CD4-positive, alpha-beta memory T cell (primary cell): ENCODE measurements at regions of chr19 and their contacts with region 1.

Region 1: GRCh38 chr19:11798391-11799330 is at the start of gene ZNF491:
- DNase-seq: peak; percentile 72 to 84 (median 73)
- H3K4me3 ChIP-seq: peak within 1 kb of the TSS in 1 of 2 donors; percentile 58
- H3K4me3 Mint-ChIP-seq: peak within 1 kb of the TSS; percentile 87 to 93 (median 90)
- H3K27ac ChIP-seq: peak within 1 kb of the TSS; percentile 64
- H3K27ac Mint-ChIP-seq: peak within 1 kb of the TSS; percentile 75 to 92 (median 88)
- H3K4me1 ChIP-seq: peaks cover 11% of the 10 kb centered on the region
- H3K4me1 Mint-ChIP-seq: peaks cover 10 to 18% (median 12%) of the 10 kb centered on the region in 4 donors
- H3K27me3 ChIP-seq: no peaks in the 10 kb centered on the region
- H3K27me3 Mint-ChIP-seq: no peaks in the 10 kb centered on the region
- total RNA-seq, gene ZNF491: 2.0 to 3.0 TPM

Region 2: DNA sequence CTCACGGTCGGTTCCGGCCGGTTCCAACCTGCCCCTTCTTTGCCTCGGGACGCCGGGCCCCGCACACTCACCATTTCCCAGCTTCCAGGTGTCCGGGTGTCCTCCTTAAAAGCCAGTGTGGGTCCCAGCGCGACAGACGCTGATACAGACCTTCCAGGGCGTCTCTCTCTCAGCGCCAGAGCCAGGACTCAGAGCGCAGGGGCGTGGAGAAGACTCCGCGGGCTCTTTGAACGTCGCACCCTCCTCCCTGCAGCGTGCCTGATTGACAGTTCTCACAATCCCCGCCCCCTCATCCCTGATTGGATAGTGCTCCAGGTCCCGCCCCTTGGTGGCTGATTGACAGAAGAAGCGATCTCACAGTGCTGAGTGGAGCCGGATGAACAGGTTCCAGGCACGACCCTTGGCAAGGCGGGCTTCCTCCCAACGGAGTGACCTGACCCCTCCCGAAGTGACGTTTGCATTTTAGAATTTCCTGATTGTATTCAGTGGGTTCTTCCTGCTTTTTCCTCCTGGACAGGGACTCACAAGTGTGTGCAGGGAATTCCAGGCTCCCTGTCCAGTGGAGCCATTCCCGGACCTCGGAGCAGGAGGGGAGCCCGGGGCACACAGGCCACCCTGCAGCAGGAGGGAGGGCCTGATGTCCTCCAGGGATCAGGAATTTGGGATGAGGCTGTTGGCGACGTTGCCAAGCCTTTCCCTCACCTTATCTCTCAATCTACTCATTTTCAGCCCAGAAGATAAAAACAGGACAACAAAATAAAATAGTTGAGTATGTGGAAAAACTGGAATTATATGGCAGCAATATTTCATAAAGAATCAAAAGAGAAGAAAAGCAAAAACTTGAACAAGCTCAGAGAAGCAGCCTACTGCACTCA is 59.7 kb before region 1 on chr19 and contains the start of gene ZNF823:
- CTCF ChIA-PET with region 1: interaction called, 3 read pairs
- POLR2A ChIA-PET with region 1: no interaction called
- intact Hi-C with region 1: loop called (anchors 5 kb)
- DNase-seq: peak; percentile 94 to 97 (median 95)
- H3K4me3 ChIP-seq: peak within 1 kb of the TSS; percentile 45 to 80
- H3K4me3 Mint-ChIP-seq: peak within 1 kb of the TSS; percentile 96 to 100 (median 99)
- H3K27ac ChIP-seq: peak within 1 kb of the TSS; percentile 63
- H3K27ac Mint-ChIP-seq: peak within 1 kb of the TSS; percentile 77 to 99 (median 97)
- H3K4me1 ChIP-seq: peaks cover 15% of the 10 kb centered on the region
- H3K4me1 Mint-ChIP-seq: peaks cover 15 to 30% (median 17%) of the 10 kb centered on the region in 4 donors
- H3K27me3 ChIP-seq: no peaks in the 10 kb centered on the region
- H3K27me3 Mint-ChIP-seq: no peaks in the 10 kb centered on the region
- total RNA-seq, gene ZNF823: 4.6 to 5.4 TPM

Region 3: DNA sequence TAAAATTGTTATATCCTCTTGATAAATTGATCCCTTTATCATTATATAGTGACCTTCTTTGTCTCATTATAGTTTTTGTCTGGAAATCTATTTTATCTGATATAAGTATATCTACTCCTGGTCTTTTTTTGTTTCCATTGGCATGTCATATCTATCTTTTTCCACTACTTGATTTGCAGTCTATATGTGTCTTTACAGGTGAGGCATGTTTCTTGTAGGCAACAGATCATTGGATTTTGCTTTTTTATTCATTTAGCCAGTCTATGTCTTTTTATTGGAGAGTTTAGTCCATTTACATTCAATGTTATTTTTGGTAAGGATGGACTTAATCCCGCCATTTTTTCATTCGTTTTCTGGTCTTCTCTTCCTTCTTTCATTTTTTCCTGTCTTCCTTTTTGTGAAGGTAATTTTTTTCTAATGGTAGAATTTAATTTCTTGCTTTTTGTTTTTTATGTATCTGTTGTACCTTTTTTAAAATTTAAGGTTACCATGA is 46.4 kb before region 1 on chr19:
- CTCF ChIA-PET with region 1: no interaction called
- POLR2A ChIA-PET with region 1: no interaction called
- intact Hi-C with region 1: no loop called
- DNase-seq: no peak
- H3K4me3 ChIP-seq: no peak overlapping the region
- H3K4me3 Mint-ChIP-seq: no peak overlapping the region
- H3K27ac ChIP-seq: no peak overlapping the region
- H3K27ac Mint-ChIP-seq: no peak overlapping the region
- H3K4me1 ChIP-seq: no peaks in the 10 kb centered on the region
- H3K4me1 Mint-ChIP-seq: no peaks in the 10 kb centered on the region
- H3K27me3 ChIP-seq: no peaks in the 10 kb centered on the region
- H3K27me3 Mint-ChIP-seq: peaks cover 7 to 11% of the 10 kb centered on the region in 2 donors

Region 4: DNA sequence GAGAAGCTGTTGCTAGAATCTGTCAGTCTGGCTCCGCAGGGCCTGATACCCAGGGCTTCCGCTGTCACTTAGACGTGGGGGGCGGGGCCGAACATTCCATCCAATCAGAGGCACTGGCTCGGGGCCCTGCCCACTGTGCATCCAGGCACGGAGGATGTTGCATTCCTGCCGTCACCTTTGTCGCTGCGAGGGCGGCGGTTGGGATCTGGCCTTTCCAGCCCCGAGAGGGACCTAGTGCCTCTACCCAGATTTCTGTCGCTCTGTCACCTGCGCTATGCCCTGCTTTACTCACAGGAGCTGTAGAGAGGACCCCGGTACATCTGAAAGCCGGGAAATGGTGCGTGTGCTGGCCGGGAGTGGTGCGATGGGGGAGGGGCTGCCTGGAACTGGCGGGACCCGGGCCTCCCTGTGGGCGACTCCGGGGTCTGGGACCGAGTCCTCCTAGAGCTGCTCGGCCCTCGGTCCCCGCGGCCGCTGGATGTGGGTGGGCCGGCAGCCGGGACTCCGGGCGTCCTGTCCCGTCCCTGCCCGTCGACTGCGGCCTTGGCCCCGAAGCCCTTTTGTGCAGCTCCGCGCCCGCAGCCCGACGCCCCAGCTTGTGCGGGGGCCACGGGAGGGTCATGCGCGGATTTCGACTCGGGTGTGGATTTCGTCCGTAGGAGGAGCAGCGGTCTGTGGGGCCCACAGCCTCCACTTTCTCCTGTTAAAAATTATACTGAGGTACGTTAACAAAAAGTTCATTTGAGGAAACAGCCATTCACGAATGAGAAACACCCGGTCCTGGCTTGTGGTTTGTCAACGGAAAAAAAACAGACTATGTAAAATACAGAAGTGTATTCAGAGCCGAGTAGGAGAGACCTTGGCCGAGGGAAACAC is 50.2 kb after region 1 on chr19 and contains the start of gene ZNF439:
- CTCF ChIA-PET with region 1: interaction called, 8 read pairs
- POLR2A ChIA-PET with region 1: interaction called, 3 read pairs
- intact Hi-C with region 1: loop called (anchors 1 kb)
- DNase-seq: peak; percentile 83 to 87 (median 86)
- H3K4me3 ChIP-seq: peak within 1 kb of the TSS; percentile 39 to 82
- H3K4me3 Mint-ChIP-seq: peak within 1 kb of the TSS; percentile 89 to 94 (median 90)
- H3K27ac ChIP-seq: peak within 1 kb of the TSS; percentile 61
- H3K27ac Mint-ChIP-seq: peak within 1 kb of the TSS; percentile 64 to 94 (median 92)
- H3K4me1 ChIP-seq: peaks cover 19% of the 10 kb centered on the region
- H3K4me1 Mint-ChIP-seq: peaks cover 13 to 27% (median 15%) of the 10 kb centered on the region in 4 donors
- H3K27me3 ChIP-seq: no peaks in the 10 kb centered on the region
- H3K27me3 Mint-ChIP-seq: peaks cover 1% of the 10 kb centered on the region in 2 donors
- total RNA-seq, gene ZNF439: 16.9 to 17.7 TPM

Region 5: GRCh38 chr19:11924886-11925650 is 126.4 kb after region 1 on chr19 and contains the start of gene ZNF700:
- CTCF ChIA-PET with region 1: interaction called, 26 read pairs
- POLR2A ChIA-PET with region 1: interaction called, 13 read pairs
- intact Hi-C with region 1: loop called (anchors 1 kb)
- DNase-seq: peak; percentile 86 to 95 (median 89)
- H3K4me3 ChIP-seq: peak within 1 kb of the TSS; percentile 99
- H3K4me3 Mint-ChIP-seq: peak within 1 kb of the TSS; percentile 93 to 98 (median 96)
- H3K27ac ChIP-seq: peak within 1 kb of the TSS; percentile 87
- H3K27ac Mint-ChIP-seq: peak within 1 kb of the TSS; percentile 92 to 98 (median 96)
- H3K4me1 ChIP-seq: peaks cover 31% of the 10 kb centered on the region
- H3K4me1 Mint-ChIP-seq: peaks cover 26 to 58% (median 40%) of the 10 kb centered on the region in 4 donors
- H3K27me3 ChIP-seq: no peaks in the 10 kb centered on the region
- H3K27me3 Mint-ChIP-seq: no peaks in the 10 kb centered on the region
- total RNA-seq, gene ZNF700: 24.9 to 25.6 TPM

Region 6: DNA sequence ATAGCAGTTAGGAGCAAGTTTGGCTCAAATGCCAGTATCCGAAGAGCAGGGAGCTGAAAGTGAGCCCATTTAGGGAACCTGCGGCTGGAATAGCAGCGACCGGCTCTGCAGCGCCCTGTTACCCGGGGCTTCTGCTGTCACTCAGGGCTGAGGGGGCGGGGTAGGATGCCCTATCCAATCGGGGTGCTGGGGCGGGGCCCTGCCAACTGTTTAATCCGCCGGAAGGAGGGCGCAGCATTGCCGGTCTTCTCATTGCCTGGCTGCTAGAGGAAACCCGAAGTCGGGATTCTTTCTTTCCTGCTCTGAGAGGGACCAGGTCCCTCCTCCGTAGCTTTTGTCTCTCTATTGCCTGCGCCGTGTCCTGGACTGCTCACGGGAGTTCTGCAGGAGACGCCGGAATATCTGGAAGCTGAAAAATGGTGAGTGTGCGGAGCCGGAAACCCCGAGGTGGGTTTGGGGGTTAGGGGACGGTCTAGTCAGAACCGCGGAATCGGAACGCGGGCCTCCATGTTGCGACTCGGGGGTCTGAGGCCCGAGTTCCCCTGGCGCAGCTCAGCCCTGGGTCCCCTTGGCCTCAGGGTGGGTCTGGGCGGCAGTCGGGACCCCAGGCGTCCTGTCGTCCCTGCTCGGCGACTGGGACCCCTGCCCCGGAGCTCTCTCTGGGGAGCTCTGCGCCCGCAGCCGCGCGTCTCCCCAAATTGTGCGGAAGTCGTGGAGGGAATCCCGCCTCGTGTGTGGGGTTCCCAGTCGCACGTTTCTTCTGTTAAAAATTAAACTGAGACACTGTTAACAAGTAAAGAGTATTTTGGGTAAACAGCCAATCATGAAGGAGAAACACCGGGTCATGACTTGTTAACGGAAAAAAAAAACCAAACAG is 189.0 kb after region 1 on chr19:
- CTCF ChIA-PET with region 1: interaction called, 49 read pairs
- POLR2A ChIA-PET with region 1: interaction called, 10 read pairs
- intact Hi-C with region 1: loop called (anchors 1 kb)
- DNase-seq: peak; percentile 83 to 92 (median 85)
- H3K4me3 ChIP-seq: peak overlapping the region; percentile 66 to 67
- H3K4me3 Mint-ChIP-seq: peak overlapping the region; percentile 91 to 99 (median 98)
- H3K27ac ChIP-seq: peak overlapping the region; percentile 73
- H3K27ac Mint-ChIP-seq: peak overlapping the region; percentile 95 to 99 (median 97)
- H3K4me1 ChIP-seq: peaks cover 7% of the 10 kb centered on the region
- H3K4me1 Mint-ChIP-seq: peaks cover 15 to 29% (median 18%) of the 10 kb centered on the region in 4 donors
- H3K27me3 ChIP-seq: no peaks in the 10 kb centered on the region
- H3K27me3 Mint-ChIP-seq: no peaks in the 10 kb centered on the region

Region 7: DNA sequence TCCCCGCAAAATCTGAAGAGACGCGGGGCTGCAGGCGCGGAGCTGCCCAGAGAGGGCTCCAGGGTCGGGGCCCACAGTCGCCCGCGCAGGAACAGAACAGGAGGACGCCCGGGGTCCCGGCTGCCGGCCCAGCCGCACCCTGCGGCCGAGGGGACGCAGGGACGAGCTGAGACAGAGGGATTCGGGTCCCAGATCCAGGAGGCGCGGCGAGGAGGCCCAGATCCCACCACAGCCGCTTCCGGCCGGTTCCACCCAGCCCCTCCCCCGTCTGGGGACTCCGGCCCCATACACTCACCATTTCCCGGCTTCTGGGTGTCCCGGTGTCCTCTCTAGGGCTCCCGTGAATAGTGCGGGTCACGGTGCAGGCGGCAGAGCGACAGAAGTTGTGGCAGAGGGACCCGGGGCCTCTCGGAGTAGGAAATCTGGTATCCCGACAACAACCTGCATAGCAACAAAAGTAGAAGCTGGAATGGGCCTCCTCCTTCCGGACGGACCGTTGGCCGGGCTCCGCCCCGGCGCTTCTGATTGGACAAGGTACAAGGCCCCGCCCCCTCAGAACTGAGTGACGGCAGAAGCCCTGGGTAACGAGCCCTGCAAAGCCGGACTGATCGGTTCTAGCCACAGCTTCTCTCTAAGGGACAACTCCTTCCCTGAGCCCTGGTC is 341.4 kb after region 1 on chr19 and contains the start of gene ZNF20:
- CTCF ChIA-PET with region 1: interaction called, 19 read pairs
- POLR2A ChIA-PET with region 1: interaction called, 5 read pairs
- intact Hi-C with region 1: loop called (anchors 1 kb)
- DNase-seq: peak; percentile 76 to 86 (median 80)
- H3K4me3 ChIP-seq: peak within 1 kb of the TSS; percentile 66 to 86
- H3K4me3 Mint-ChIP-seq: peak within 1 kb of the TSS; percentile 81 to 95 (median 91)
- H3K27ac ChIP-seq: peak within 1 kb of the TSS; percentile 63
- H3K27ac Mint-ChIP-seq: peak within 1 kb of the TSS; percentile 58 to 93 (median 79)
- H3K4me1 ChIP-seq: peaks cover 26% of the 10 kb centered on the region
- H3K4me1 Mint-ChIP-seq: peaks cover 28 to 43% (median 33%) of the 10 kb centered on the region in 4 donors
- H3K27me3 ChIP-seq: no peaks in the 10 kb centered on the region
- H3K27me3 Mint-ChIP-seq: no peaks in the 10 kb centered on the region
- total RNA-seq, gene ZNF20: 4.0 to 7.4 TPM